Vagina (tissue), 2 donors: ENCODE measurements at regions of chr11 and their contacts with region 1.

Region 1: DNA sequence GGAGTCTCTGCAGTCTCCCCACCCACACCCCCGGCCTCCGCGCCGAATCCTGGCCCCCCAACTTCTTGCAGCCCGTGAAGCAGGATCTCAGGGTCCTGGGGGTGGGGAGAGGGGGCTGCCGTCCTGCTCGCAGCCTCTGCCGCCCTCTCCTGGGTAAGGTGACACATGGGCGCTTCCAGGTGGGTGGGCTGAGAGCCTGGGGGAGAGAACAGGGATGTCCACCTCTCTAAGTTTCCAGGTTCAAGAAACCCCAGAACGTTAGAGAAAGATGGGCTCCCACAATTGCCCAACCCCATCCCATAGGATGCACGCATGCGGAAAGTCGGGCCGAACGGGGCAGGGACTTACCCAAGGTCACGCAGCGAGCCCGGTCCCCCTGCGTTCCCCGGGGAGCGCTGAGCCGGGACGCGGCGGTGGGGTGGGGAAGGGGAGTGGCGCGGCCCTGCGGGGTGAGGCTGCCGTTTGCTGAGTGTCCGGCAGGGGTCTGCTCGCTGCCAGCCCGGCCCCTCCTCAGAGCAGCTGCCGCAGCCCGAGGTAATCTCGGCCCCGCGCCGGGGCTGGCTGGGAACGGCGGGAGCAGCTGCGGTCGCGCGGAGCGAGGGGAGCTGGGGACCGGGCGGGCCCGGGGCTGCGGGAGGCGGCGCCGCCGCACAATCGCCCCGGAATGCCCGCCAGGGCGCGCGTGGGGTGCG is 705 bp upstream of the CAPN1 start:
- DNase-seq: no peak
- H3K4me3 ChIP-seq: peak overlapping the region; percentile 94 to 97
- H3K27ac ChIP-seq: peak overlapping the region; percentile 89
- H3K4me1 ChIP-seq: peaks cover 43% of the 10 kb centered on the region
- H3K27me3 ChIP-seq: no peaks in the 10 kb centered on the region
- CTCF ChIP-seq: peak in 2 of 3 experiments; percentile 35 to 37
- POLR2A ChIP-seq: no peak

Region 2: GRCh38 chr11:65134386-65135253 is 46.4 kb before region 1 on chr11 and contains the start of gene SYVN1:
- intact Hi-C with region 1: loop called (anchors 2 kb)
- DNase-seq: peak in 1 of 2 donors; percentile 98
- H3K4me3 ChIP-seq: peak within 1 kb of the TSS; percentile 87 to 89
- H3K27ac ChIP-seq: peak within 1 kb of the TSS; percentile 94
- H3K4me1 ChIP-seq: peaks cover 30% of the 10 kb centered on the region
- H3K27me3 ChIP-seq: no peaks in the 10 kb centered on the region
- CTCF ChIP-seq: peak in 1 of 3 experiments; percentile 6
- POLR2A ChIP-seq: peak in 1 of 2 donors; percentile 90
- total RNA-seq, gene SYVN1: 42.5 TPM